Sciatic nerve (tissue), 2 donors: ENCODE measurements at regions of chr11 and their contacts with region 1.

Region 1: GRCh38 chr11:105490333-105490732 is 119.5 kb upstream of the GRIA4 start:
- DNase-seq: no peak
- ATAC-seq: no peak

Region 2: DNA sequence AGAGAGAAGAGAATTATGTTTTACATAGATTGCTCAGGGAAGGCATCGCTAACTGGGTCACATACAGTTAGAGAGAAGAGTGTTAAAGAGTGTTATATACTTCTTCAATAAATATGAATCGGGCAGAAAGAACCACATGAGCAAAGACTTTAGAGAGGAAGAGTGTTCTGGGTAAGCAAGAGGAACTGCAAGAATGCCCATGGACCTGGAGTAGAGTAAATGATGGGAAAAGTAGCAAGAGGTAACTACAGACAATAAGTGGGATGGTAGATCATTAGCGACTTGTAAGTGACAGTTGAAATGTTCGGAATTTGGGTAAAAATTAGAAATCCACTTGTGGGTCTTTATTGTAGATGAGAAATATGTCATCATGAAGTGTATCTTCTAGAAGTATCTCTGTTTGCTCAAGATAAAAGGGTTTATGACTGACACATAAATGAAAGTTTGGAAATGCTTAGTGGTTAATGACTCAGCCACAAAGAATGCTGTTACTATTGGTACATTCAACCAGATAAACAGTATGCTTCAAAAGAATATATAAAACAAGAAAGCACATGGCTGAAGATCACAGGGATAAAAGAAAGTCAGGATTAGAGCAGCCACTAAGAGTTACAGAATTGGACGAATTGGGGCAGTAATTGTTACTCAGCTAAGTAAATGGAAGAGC is 821.4 kb before region 1 on chr11:
- intact Hi-C with region 1: loop called (anchors 5 kb)
- DNase-seq: no peak
- ATAC-seq: no peak

Region 3: GRCh38 chr11:105381941-105382340 is 108.4 kb before region 1 on chr11:
- intact Hi-C with region 1: no loop called
- DNase-seq: no peak
- ATAC-seq: no peak